ENCODE measurements at regions of chr19 and their contacts with region 1.

Region 1: GRCh38 chr19:10808937-10809652 is 26.9 kb downstream of the TMED1 start:
- DNase-seq: peak; percentile 72
- H3K4me3 ChIP-seq: no peak overlapping the region
- H3K27ac ChIP-seq: peak overlapping the region; percentile 2
- H3K4me1 ChIP-seq: peaks cover 21% of the 10 kb centered on the region
- H3K27me3 ChIP-seq: no peaks in the 10 kb centered on the region
- CTCF ChIP-seq: no peak

Region 2: GRCh38 chr19:10756371-10756770 is 52.7 kb before region 1 on chr19:
- CTCF ChIA-PET with region 1: no interaction called
- dilution Hi-C with region 1: loop called (anchors 5 kb)
- in situ Hi-C with region 1: no loop called
- intact Hi-C with region 1: no loop called
- DNase-seq: no peak
- H3K4me3 ChIP-seq: no peak overlapping the region
- H3K27ac ChIP-seq: no peak overlapping the region
- H3K4me1 ChIP-seq: no peaks in the 10 kb centered on the region
- H3K27me3 ChIP-seq: no peaks in the 10 kb centered on the region
- CTCF ChIP-seq: no peak